ENCODE measurements at regions of chr14 and their contacts with region 1.

Region 1: GRCh38 chr14:39368261-39368959 is 63.8 kb downstream of the FBXO33 start:
- DNase-seq: peak; percentile 56
- H3K4me3 ChIP-seq: no peak overlapping the region
- H3K27ac ChIP-seq: no peak overlapping the region
- H3K4me1 ChIP-seq: no peaks in the 10 kb centered on the region
- CTCF ChIP-seq: peak; percentile 85

Region 2: DNA sequence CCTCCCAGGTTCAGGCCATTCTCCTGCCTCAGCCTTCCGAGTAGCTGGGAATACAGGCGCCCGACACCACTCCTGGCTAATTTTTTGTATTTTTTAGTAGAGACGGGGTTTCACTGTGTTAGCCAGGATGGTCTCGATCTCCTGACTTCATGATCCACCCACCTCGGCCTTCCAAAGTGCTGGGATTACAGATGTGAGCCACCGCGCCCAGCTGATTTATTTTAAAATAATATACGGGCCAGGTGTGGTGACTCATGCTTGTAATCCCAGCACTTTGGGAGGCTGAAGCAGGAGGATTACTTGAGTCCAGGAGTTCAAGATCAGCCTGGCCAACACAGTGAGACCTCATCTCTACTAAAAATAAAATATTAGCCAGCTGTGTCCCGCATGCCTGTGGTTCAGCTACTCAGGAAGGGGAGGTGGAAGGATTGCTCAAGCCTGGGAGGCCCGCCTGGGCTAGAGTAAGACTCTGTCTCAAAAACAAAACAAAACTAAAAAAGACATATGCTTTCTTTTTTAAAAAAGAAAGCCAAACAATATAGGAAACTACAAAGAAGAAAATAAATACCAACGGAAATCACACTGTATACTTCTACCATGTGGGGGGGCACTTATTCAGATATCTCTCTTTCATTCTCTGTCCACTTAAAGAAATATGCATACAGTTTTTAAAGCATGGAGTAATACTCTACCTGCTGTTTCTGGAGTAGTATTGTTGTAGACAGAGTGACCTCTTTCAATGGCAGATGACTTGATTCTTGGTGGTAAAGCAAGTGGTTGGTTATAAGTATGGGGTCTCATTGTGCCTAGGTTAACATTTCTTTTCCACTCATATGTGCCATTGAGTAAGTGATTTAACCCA is 135.6 kb before region 1 on chr14:
- CTCF ChIA-PET with region 1: no interaction called
- POLR2A ChIA-PET with region 1: no interaction called
- intact Hi-C with region 1: loop called (anchors 5 kb)
- DNase-seq: no peak
- H3K4me3 ChIP-seq: no peak overlapping the region
- H3K27ac ChIP-seq: no peak overlapping the region
- H3K4me1 ChIP-seq: no peaks in the 10 kb centered on the region
- CTCF ChIP-seq: 0 out of 2 replicates have a peak, but pooled peaks have one; percentile 22